Tibial artery (tissue), 4 donors: ENCODE measurements at regions of chr14 and their contacts with region 1.

Region 1: GRCh38 chr14:23379366-23380196 is 2.7 kb downstream of the CMTM5 start:
- DNase-seq: no peak
- H3K4me3 ChIP-seq: no peak overlapping the region
- H3K27ac ChIP-seq: no peak overlapping the region
- H3K4me1 ChIP-seq: peaks cover 0 to 6% (median 2%) of the 10 kb centered on the region in 4 donors
- H3K27me3 ChIP-seq: peaks cover 0 to 23% of the 10 kb centered on the region in 2 donors
- CTCF ChIP-seq: peak; percentile 82 to 87

Region 2: GRCh38 chr14:23269193-23269592 is 110.4 kb before region 1 on chr14:
- intact Hi-C with region 1: loop called (anchors 5 kb)
- DNase-seq: no peak
- H3K4me3 ChIP-seq: no peak overlapping the region
- H3K27ac ChIP-seq: no peak overlapping the region
- H3K4me1 ChIP-seq: no peaks in the 10 kb centered on the region
- H3K27me3 ChIP-seq: no peaks in the 10 kb centered on the region
- CTCF ChIP-seq: no peak

Region 3: GRCh38 chr14:23327947-23328744 is 51.4 kb before region 1 on chr14:
- intact Hi-C with region 1: loop called (anchors 2 kb)
- DNase-seq: peak in 1 of 2 donors; percentile 67
- H3K4me3 ChIP-seq: no peak overlapping the region
- H3K27ac ChIP-seq: no peak overlapping the region
- H3K4me1 ChIP-seq: peaks cover 0 to 9% (median 2%) of the 10 kb centered on the region in 4 donors
- H3K27me3 ChIP-seq: no peaks in the 10 kb centered on the region
- CTCF ChIP-seq: peak; percentile 79 to 90